Caco-2 (cell line): ENCODE measurements at regions of chr11 and their contacts with region 1.

Region 1: GRCh38 chr11:66976048-66976467 is 954 bp downstream of the C11orf86 start:
- DNase-seq: peak; percentile 70 to 84
- H3K4me3 ChIP-seq: no peak overlapping the region
- H3K4me3 Mint-ChIP-seq: no peak overlapping the region
- H3K27ac Mint-ChIP-seq: no peak overlapping the region
- H3K4me1 ChIP-seq: peaks cover 8% of the 10 kb centered on the region
- H3K4me1 Mint-ChIP-seq: no peaks in the 10 kb centered on the region
- H3K27me3 ChIP-seq: no peaks in the 10 kb centered on the region
- H3K27me3 Mint-ChIP-seq: no peaks in the 10 kb centered on the region
- CTCF ChIP-seq: peak; percentile 93 to 95

Region 2: GRCh38 chr11:66659763-66660162 is 316.3 kb before region 1 on chr11:
- CTCF ChIA-PET with region 1: no interaction called
- POLR2A ChIA-PET with region 1: no interaction called
- intact Hi-C with region 1: no loop called
- DNase-seq: no peak
- H3K4me3 ChIP-seq: no peak overlapping the region
- H3K4me3 Mint-ChIP-seq: peak overlapping the region; percentile 1
- H3K27ac Mint-ChIP-seq: peak overlapping the region; percentile 1
- H3K4me1 ChIP-seq: peaks cover 8% of the 10 kb centered on the region
- H3K4me1 Mint-ChIP-seq: peaks cover 12% of the 10 kb centered on the region
- H3K27me3 ChIP-seq: no peaks in the 10 kb centered on the region
- H3K27me3 Mint-ChIP-seq: no peaks in the 10 kb centered on the region
- CTCF ChIP-seq: no peak

Region 3: GRCh38 chr11:66868726-66869566 is 107.1 kb before region 1 on chr11:
- CTCF ChIA-PET with region 1: no interaction called
- POLR2A ChIA-PET with region 1: no interaction called
- intact Hi-C with region 1: loop called (anchors 5 kb)
- DNase-seq: peak; percentile 93 to 94
- H3K4me3 ChIP-seq: no peak overlapping the region
- H3K4me3 Mint-ChIP-seq: no peak overlapping the region
- H3K27ac Mint-ChIP-seq: no peak overlapping the region
- H3K4me1 ChIP-seq: peaks cover 4% of the 10 kb centered on the region; the same call in 1 of the 2 replicates
- H3K4me1 Mint-ChIP-seq: no peaks in the 10 kb centered on the region
- H3K27me3 ChIP-seq: no peaks in the 10 kb centered on the region
- H3K27me3 Mint-ChIP-seq: no peaks in the 10 kb centered on the region
- CTCF ChIP-seq: peak; percentile 88 to 94

Region 4: GRCh38 chr11:67195971-67196456 is 220.0 kb after region 1 on chr11:
- CTCF ChIA-PET with region 1: no interaction called
- POLR2A ChIA-PET with region 1: no interaction called
- intact Hi-C with region 1: no loop called
- DNase-seq: peak in 1 of 2 experiments; percentile 32
- H3K4me3 ChIP-seq: no peak overlapping the region
- H3K4me3 Mint-ChIP-seq: no peak overlapping the region
- H3K27ac Mint-ChIP-seq: no peak overlapping the region
- H3K4me1 ChIP-seq: no peaks in the 10 kb centered on the region
- H3K4me1 Mint-ChIP-seq: peaks cover 8% of the 10 kb centered on the region
- H3K27me3 ChIP-seq: no peaks in the 10 kb centered on the region
- H3K27me3 Mint-ChIP-seq: no peaks in the 10 kb centered on the region
- CTCF ChIP-seq: peak in 1 of 2 experiments; percentile 5